ENCODE measurements at regions of chr17 and their contacts with region 1.

Region 1: DNA sequence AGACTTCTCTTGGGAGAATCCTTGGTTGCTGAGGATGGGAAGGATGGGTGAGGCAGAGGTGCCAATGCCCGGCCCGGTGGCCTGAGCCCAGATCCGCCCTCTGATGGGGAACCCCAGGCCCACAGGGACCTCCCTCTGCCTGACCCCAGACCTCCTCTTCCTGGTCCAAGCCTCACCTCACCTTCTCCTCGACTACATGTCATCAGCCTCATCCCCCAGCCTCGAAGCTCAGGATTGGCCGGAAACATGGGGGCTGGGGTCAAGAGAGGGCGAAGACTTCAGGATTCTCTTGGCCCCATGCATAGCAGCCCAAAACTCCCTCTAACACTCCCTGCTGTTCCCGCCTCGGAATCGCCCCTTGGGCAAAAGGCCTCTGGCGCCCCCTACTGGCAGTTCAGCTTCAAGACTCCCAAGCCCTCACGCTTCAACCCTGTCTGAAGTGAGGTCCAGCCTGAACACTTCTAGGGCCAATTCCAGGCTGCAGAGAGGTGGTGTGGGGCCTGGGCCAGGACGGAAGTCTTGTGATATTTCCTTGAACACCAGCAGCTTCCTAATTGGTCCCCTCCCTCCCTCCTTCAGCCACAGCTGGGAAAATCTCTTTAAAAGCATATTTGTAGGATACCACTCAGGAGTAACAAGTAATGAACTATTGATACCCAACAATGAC is 47.2 kb downstream of the ARHGAP27 start:
- DNase-seq: peak; percentile 96
- ATAC-seq: peak; percentile 96
- H3K4me3 Mint-ChIP-seq: no peak overlapping the region
- H3K27ac Mint-ChIP-seq: peak overlapping the region; percentile 71
- H3K4me1 Mint-ChIP-seq: peaks cover 14% of the 10 kb centered on the region
- H3K27me3 Mint-ChIP-seq: peaks cover 4% of the 10 kb centered on the region

Region 2: DNA sequence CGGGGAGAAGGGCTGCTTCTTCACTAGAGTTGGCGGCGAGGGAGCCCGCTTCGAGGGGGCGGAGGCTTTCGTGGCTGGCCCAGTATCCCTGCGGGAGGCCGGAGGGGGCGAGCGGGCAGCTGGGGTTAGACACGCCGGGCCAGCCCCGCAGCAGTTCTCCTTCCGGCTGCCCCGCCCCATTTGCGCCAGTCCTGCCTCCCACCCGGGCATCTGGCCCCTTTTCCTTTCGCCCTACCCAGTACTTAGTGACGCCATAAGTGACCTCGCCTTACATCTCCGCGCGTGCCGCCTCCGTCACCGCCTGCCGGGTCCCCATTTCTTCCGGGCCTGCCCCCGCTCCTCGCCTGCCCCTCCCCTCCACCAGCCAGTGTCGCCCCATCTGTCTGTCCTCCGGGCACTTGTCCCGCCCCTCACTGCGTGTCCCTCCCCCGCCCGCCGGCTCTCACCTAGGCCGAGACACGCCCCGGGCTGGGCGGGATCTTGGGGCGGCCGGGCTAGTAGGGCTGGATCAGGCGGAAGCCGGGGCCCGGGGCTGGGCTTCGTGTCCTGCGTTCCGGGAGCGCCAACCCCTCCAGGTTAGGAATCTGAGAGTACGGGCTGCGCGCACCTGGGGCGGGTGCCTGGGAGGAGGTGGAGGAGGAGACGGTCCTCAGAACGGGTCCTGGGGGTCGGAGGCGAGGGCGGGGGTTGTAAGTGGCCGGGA is 137.9 kb before region 1 on chr17:
- CTCF ChIA-PET with region 1: interaction called, 4 read pairs
- POLR2A ChIA-PET with region 1: no interaction called
- intact Hi-C with region 1: loop called in 1 of 2 experiments (anchors 1 kb)
- DNase-seq: peak; percentile 99
- ATAC-seq: peak; percentile 89
- H3K4me3 Mint-ChIP-seq: peak overlapping the region; percentile 83
- H3K27ac Mint-ChIP-seq: peak overlapping the region; percentile 92
- H3K4me1 Mint-ChIP-seq: peaks cover 57% of the 10 kb centered on the region
- H3K27me3 Mint-ChIP-seq: no peaks in the 10 kb centered on the region

Region 3: GRCh38 chr17:45261577-45262515 is 123.6 kb before region 1 on chr17 and contains the start of gene SPATA32:
- CTCF ChIA-PET with region 1: interaction called, 4 read pairs
- POLR2A ChIA-PET with region 1: no interaction called
- intact Hi-C with region 1: loop called in 1 of 2 experiments (anchors 5 kb)
- DNase-seq: peak; percentile 81
- ATAC-seq: peak; percentile 80
- H3K4me3 Mint-ChIP-seq: peak within 1 kb of the TSS; percentile 59
- H3K27ac Mint-ChIP-seq: peak within 1 kb of the TSS; percentile 72
- H3K4me1 Mint-ChIP-seq: peaks cover 34% of the 10 kb centered on the region
- H3K27me3 Mint-ChIP-seq: no peaks in the 10 kb centered on the region
- total RNA-seq, gene SPATA32: 0.21 to 0.25 TPM

Region 4: DNA sequence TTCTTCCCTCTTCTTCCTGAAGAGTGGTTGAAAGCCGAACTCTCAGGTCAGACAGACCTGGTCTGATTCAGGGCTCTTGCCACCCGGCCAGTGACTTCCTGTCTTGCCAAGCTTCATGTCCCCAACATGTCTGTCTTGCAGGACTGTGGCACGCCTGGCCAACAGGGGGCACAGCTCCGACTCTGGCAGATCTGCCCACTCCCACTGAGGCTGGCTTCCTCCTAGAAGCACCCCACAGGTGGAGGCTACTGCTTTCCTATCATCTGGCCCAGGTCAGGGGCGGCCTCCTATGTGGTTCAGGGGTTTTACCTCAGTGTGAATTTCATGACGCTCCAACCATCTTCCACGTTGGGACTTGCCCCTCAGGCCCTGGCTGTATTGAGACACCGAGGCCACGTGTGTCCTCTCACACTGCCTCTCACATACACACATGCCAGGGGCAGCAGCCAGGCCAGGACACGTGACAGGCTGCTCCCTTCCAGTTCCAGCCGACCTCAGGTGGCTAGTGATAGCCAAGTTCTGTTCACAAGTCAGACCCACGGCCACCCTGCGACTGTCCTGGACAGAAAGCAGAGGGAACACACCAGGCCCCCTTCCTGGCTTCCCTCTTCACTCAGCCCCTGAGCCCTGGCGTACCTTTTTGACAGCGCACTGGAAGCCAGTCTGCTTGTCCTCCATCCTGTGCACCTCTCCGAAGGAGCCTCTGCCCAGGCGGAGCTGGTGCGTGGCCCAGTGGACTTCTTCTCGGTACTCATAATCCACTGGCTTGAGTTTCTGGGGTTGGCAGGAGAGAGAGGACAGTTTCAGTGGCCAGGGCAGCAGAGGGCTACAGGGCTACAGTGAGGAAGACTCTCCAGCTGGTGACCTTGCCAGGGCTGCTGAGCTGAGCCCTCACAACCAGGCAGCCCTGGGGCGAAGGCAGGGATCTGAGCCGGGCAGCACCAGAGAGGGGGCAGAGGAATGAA is 101.0 kb before region 1 on chr17:
- CTCF ChIA-PET with region 1: interaction called, 13 read pairs
- POLR2A ChIA-PET with region 1: interaction called, 3 read pairs
- intact Hi-C with region 1: no loop called
- DNase-seq: peak; percentile 69
- ATAC-seq: peak; percentile 70
- H3K4me3 Mint-ChIP-seq: no peak overlapping the region
- H3K27ac Mint-ChIP-seq: peak overlapping the region; percentile 78
- H3K4me1 Mint-ChIP-seq: peaks cover 8% of the 10 kb centered on the region
- H3K27me3 Mint-ChIP-seq: no peaks in the 10 kb centered on the region

Region 5: DNA sequence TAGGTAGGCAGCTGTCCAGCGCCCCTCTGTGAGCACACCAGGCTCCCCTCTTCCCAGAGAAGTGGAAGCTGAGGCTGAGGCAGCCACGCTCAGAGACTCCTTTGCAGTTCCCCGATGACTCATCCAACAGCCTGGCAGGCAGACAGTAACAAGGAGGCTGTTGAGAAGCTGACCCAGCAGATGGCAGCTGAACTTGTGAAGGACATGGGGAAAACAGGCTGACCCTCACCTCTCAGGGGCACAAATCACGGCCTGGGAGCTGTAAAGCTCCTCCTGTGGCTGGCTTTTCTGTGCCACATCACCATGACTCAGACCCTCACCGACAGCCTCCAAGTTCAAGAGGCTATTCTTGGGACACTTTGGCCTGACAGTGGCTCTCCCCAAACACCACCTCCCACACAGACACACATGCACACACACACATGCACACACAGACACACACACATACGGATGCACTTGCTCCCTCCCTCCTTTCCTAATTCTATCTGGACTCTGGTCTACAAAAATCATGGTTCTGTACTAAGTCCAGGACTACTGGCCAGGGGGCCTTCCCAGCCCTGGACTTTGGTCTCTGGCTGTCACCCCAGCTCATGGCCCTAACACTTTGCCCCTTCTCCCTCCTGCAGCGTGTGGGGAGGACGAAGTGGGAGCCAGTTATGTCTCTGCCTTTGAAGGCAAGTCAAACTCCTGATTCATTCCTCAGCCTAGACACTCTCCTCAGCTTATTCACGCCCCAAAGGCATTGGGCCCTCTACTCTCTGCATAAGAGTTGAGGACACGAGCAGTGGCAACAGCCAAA is 91.9 kb before region 1 on chr17:
- CTCF ChIA-PET with region 1: interaction called, 12 read pairs
- POLR2A ChIA-PET with region 1: no interaction called
- intact Hi-C with region 1: loop called in 1 of 2 experiments (anchors 5 kb)
- DNase-seq: peak; percentile 60
- ATAC-seq: peak; percentile 75
- H3K4me3 Mint-ChIP-seq: no peak overlapping the region
- H3K27ac Mint-ChIP-seq: peak overlapping the region; percentile 71
- H3K4me1 Mint-ChIP-seq: peaks cover 61% of the 10 kb centered on the region
- H3K27me3 Mint-ChIP-seq: no peaks in the 10 kb centered on the region

Region 6: DNA sequence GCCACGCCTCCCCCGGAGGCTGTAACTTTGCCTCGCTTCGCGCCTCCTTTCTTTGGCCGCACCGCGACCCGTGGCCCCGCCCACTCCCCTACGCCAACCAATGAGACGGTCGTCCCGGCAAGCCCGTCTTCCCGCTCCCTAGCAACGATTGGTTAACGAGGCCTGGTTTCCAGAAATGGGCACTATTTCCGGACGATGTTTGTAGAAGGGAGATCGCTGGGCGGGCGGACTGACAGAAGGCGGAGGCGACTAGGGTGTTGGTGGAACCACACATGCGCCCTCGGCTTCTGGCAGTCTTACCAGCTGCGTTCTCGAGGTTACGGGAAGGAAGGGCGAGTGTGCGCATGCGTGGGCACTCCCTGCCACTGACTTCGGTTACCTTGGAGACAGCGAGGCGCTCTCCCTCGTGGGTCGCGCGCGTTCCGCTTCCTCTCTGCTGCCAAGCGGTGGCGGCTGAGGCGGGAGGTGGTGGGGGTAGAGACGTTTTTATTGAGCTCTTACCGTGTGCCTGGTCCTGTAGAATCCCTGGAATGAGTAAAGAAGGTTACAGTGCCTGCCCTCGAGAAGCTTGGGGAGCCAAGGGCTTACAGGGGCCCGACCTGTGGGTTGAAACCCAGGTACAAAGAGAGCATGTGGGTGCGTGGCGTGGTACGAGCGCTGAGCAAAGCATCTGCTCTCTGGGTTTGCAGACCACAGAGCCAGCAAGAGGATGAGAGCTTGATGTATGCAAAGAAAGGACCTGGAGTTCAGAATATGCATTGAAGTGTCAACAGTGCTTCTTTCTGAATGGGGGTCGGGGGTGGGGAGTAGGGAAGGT is 68.1 kb before region 1 on chr17:
- CTCF ChIA-PET with region 1: interaction called, 19 read pairs
- POLR2A ChIA-PET with region 1: interaction called, 5 read pairs
- intact Hi-C with region 1: loop called (anchors 2 to 5 kb)
- DNase-seq: peak; percentile 100
- ATAC-seq: peak; percentile 81
- H3K4me3 Mint-ChIP-seq: peak overlapping the region; percentile 91
- H3K27ac Mint-ChIP-seq: peak overlapping the region; percentile 89
- H3K4me1 Mint-ChIP-seq: peaks cover 65% of the 10 kb centered on the region
- H3K27me3 Mint-ChIP-seq: no peaks in the 10 kb centered on the region

Region 7: DNA sequence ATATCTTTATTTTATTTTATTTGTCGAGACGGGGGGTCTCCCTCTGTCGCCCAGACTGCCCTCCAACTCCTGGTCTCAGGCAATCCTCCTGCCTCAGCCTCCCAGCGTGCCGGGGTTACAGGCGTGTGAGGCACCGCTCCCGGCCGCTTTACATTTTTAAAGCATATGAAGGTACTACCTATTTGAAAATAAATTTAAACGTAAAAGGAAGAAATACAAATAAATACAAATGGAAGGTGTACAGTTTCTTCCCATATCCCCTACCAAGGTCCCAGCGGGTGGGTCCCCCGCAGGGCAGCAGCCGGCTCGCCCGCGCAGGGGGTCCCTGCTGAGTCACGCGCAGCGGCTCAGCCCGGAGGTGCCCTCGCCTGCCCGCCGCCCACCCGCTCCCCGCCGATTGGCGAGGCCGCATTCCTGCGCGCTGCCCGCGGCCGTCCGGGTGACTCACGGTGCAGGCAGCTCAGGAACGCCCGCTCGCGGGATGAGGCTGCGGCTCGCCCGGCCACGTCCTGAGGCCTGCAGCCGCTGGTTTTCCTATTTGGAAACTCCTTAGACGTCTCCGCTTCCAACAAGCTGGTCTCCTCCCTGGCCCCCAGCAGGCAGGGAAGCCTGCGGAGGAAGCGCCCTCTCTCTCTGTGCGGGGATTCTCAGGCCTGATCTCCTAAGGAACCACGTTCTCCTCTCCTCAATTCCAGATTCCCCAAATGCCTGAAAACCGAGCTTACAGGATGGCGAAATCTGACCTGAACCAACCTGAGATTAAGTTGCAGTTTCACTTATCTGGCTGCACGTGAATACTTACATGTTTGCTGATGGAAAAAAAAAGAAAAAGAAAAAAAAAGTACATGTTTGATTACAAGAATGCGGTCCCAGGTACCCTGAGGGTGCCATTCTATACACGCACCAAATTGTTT is 13.8 kb before region 1 on chr17:
- CTCF ChIA-PET with region 1: interaction called, 12 read pairs
- POLR2A ChIA-PET with region 1: no interaction called
- intact Hi-C with region 1: no loop called
- DNase-seq: peak; percentile 75
- ATAC-seq: peak; percentile 89
- H3K4me3 Mint-ChIP-seq: peak overlapping the region; percentile 55
- H3K27ac Mint-ChIP-seq: peak overlapping the region; percentile 51
- H3K4me1 Mint-ChIP-seq: peaks cover 17% of the 10 kb centered on the region
- H3K27me3 Mint-ChIP-seq: peaks cover 12% of the 10 kb centered on the region

Region 8: DNA sequence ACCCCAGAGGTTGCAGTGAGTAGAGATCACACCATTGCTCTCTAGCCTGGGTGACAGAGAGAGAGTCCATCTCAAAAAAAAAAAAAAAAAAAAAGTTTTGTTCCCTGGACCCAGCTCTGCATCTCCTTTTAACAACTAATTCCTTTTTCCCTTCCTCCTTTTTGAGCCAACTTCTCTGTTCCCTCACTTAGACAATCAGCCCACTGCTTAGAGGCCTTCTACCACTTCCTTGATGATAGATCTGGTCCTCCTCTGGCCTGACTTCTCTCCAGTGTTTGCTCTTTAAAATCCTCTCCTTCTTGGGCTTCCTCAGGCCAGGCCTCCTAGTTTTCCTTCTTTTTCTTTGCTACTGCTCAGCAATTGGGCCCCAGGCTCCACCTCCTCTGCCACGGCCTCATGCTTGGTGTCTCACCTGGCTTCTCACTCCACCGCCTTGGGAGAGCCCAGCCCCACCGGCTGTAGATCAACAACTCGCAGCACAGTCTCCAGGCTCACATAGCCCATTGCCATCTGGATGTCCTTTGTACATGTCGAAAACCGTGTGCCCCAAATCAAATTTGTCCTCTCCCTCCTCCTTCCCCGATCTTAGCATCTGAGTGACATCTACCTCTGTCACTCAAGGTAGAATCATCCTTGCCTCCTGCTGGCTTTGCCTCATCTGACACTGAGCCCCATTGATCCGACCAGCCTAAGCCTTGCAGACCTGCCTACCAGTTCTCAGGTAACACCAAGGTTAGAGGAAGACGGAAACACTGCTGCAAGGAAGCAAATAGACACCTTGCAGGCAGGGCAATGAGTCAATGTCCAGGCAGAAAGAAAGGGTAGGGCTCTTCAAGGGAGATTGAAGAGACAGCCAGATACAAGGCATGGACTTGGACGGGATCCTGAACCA is 29.8 kb after region 1 on chr17:
- CTCF ChIA-PET with region 1: no interaction called
- POLR2A ChIA-PET with region 1: no interaction called
- intact Hi-C with region 1: no loop called
- DNase-seq: no peak
- ATAC-seq: no peak
- H3K4me3 Mint-ChIP-seq: no peak overlapping the region
- H3K27ac Mint-ChIP-seq: peak overlapping the region; percentile 39
- H3K4me1 Mint-ChIP-seq: peaks cover 18% of the 10 kb centered on the region
- H3K27me3 Mint-ChIP-seq: no peaks in the 10 kb centered on the region

Region 9: DNA sequence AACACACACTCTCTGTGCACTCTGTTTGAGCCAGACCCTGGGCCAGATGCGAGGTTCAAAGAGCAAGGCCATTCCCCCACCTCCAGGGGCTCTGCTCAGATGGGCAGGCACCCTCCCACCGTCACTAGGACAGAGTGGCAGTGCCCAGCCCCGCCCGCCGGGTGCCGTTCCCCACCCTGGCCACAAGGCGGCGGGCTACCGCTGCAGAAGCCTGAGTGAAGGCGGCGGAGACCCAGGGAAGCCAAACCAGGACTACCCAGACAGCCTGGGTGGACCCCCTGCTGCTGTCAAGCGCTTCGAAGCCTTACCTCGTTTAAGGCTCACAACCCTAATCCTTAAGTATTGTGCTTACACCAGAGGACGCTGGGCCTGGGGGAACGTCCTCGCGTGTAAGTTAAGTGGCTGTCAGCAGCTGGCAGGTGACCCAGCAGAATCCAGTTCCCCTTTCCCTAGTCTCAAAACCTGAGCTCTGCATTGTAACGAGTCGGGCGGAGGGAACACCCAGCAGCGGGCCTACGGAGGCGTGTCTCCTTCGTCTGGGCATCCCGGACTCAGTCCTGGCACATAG is 42.7 kb after region 1 on chr17:
- CTCF ChIA-PET with region 1: no interaction called
- POLR2A ChIA-PET with region 1: no interaction called
- intact Hi-C with region 1: no loop called
- DNase-seq: peak; percentile 88
- ATAC-seq: peak; percentile 79
- H3K4me3 Mint-ChIP-seq: peak overlapping the region; percentile 9
- H3K27ac Mint-ChIP-seq: no peak overlapping the region
- H3K4me1 Mint-ChIP-seq: peaks cover 21% of the 10 kb centered on the region
- H3K27me3 Mint-ChIP-seq: peaks cover 6% of the 10 kb centered on the region

Measured in activated CD4-positive, alpha-beta T cell treated with anti-CD3 and anti-CD28 coated beads for 36 hours (primary cell).